ENCODE measurements at regions of chr1 and their contacts with region 1.

Region 1: DNA sequence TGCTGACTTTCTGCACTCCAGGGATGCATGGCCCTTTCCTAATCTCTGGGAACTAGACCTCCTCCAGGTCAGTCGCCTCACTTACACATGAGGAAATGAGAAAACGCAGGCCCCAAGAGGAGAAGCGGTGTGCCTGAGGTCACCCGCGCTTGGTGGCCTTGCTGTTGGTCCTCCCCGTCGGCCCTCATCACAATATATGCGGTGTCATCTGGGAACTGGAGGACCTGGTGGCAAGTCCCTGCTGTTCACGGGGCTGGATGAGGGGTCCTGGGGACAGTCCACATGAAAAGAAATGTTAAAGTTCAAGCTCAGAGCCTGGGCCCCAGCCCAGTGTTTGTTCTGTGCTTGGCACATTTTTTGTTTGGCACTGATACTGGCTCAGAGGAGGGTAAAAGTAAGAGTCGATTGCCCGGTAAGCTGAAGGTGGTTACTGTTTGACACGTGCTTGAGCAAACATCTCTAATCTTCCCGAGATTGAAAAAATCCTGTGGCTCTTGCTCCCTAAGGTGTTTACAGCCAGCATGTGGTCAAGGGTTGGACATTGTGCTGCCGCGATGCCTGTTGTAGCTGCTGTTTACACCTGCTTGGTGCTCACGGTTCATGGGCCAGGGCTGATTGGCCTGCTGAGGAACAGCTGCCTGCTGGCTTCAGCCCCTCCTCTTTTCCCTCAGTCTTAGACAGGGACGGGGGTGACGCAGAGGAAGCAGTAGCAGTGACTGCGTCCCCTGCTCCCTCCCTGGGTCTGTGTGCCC is 5.2 kb downstream of the COQ8A start:
- DNase-seq: no peak
- ATAC-seq: peak in 7 of 8 donors; percentile 14 to 59 (median 51)
- H3K4me3 ChIP-seq: no peak overlapping the region
- H3K27ac ChIP-seq: peak overlapping the region; percentile 48 to 96 (median 75)
- H3K4me1 ChIP-seq: peaks cover 11 to 82% (median 71%) of the 10 kb centered on the region in 9 donors
- H3K27me3 ChIP-seq: no peaks in the 10 kb centered on the region
- CTCF ChIP-seq: no peak

Region 2: DNA sequence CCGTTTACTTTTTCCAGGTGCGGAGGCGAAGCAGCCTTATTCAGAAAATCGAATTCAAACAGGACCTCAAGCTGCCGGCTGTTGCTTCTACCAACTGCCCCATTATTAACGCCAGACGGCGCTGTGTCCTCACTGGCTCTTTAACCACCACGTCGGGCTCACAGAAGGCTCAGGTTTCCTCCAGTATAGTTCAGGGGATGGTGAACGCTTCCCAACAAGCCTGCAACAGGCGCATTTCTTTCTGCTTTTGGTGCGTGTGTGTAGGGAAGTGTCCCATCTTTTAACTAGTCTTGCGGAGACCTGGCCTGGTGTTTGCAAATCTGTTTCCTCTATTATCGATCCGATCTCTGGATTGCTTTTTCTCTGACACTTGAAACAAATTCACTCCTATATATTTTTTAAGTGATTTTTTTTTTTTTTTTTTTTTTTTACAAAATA is 397.5 kb before region 1 on chr1:
- intact Hi-C with region 1: no loop called
- DNase-seq: peak; percentile 75 to 82
- ATAC-seq: peak; percentile 69 to 83 (median 77)
- H3K4me3 ChIP-seq: peak overlapping the region in 9 of 10 donors; percentile 5 to 62 (median 55)
- H3K27ac ChIP-seq: peak overlapping the region in 1 of 10 donors; percentile 5
- H3K4me1 ChIP-seq: peaks cover 12 to 85% (median 40%) of the 10 kb centered on the region in 9 donors
- H3K27me3 ChIP-seq: peaks cover 0 to 45% (median 14%) of the 10 kb centered on the region in 7 donors
- CTCF ChIP-seq: peak; percentile 64 to 95 (median 85)

Region 3: DNA sequence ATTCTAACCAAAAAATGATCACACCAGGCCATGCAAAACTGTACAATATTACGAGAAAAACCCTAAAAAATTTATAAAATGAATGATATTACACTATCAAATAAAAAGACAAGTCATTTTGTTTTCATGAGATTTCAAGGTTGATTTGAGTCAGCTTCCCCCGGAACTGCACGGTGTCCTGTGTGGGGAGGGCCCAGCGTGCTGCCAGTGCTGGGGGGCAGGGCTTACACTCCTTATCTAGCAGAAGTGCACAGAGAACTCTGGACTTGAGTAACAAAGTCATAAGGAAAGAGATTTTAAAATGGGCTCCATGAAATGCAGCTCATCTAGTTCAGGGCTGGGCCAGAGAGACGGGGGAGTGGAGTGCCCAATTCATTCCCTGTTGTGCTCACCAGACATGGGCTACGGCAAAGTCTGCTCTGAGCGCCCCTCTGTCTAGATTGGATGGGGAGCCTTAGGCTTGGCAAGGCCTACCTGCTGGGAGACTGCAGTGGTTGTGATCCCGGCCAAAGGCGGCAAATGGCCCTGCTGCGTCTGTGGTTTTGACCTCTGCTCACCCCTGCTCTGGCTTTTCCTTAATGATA is 44.9 kb after region 1 on chr1:
- intact Hi-C with region 1: loop called in 2 of 10 experiments (anchors 5 kb)
- DNase-seq: peak in 1 of 2 donors; percentile 33
- ATAC-seq: peak in 6 of 8 donors; percentile 11 to 39 (median 26)
- H3K4me3 ChIP-seq: no peak overlapping the region
- H3K27ac ChIP-seq: peak overlapping the region in 9 of 10 donors; percentile 1 to 75 (median 57)
- H3K4me1 ChIP-seq: peaks cover 8 to 84% (median 51%) of the 10 kb centered on the region in 9 donors
- H3K27me3 ChIP-seq: no peaks in the 10 kb centered on the region
- CTCF ChIP-seq: no peak

Measured in heart right ventricle (tissue), 16 donors.